ENCODE measurements at regions of chr10 and their contacts with region 1.

Region 1: GRCh38 chr10:119270762-119271366 is 63.5 kb downstream of the GRK5 start:
- DNase-seq: no peak
- H3K4me3 ChIP-seq: no peak overlapping the region
- H3K27ac ChIP-seq: peak overlapping the region; percentile 77
- H3K4me1 ChIP-seq: peaks cover 34% of the 10 kb centered on the region
- H3K27me3 ChIP-seq: no peaks in the 10 kb centered on the region
- CTCF ChIP-seq: no peak
- POLR2A ChIP-seq: peak; percentile 56

Region 2: GRCh38 chr10:119235356-119235755 is 35.5 kb before region 1 on chr10:
- CTCF ChIA-PET with region 1: interaction called, 12 read pairs
- POLR2A ChIA-PET with region 1: interaction called, 4 read pairs
- dilution Hi-C with region 1: no loop called
- intact Hi-C with region 1: loop called (anchors 1 kb)
- DNase-seq: peak; percentile 62
- H3K4me3 ChIP-seq: no peak overlapping the region
- H3K27ac ChIP-seq: peak overlapping the region; percentile 56
- H3K4me1 ChIP-seq: peaks cover 49% of the 10 kb centered on the region
- H3K27me3 ChIP-seq: no peaks in the 10 kb centered on the region
- CTCF ChIP-seq: no peak
- POLR2A ChIP-seq: no peak

Region 3: GRCh38 chr10:119253433-119254174 is 17.3 kb before region 1 on chr10:
- CTCF ChIA-PET with region 1: interaction called, 18 read pairs
- POLR2A ChIA-PET with region 1: interaction called, 6 read pairs
- dilution Hi-C with region 1: no loop called
- intact Hi-C with region 1: loop called (anchors 1 kb)
- DNase-seq: peak; percentile 73
- H3K4me3 ChIP-seq: no peak overlapping the region
- H3K27ac ChIP-seq: peak overlapping the region; percentile 35
- H3K4me1 ChIP-seq: peaks cover 46% of the 10 kb centered on the region
- H3K27me3 ChIP-seq: no peaks in the 10 kb centered on the region
- CTCF ChIP-seq: no peak
- POLR2A ChIP-seq: no peak

Region 4: DNA sequence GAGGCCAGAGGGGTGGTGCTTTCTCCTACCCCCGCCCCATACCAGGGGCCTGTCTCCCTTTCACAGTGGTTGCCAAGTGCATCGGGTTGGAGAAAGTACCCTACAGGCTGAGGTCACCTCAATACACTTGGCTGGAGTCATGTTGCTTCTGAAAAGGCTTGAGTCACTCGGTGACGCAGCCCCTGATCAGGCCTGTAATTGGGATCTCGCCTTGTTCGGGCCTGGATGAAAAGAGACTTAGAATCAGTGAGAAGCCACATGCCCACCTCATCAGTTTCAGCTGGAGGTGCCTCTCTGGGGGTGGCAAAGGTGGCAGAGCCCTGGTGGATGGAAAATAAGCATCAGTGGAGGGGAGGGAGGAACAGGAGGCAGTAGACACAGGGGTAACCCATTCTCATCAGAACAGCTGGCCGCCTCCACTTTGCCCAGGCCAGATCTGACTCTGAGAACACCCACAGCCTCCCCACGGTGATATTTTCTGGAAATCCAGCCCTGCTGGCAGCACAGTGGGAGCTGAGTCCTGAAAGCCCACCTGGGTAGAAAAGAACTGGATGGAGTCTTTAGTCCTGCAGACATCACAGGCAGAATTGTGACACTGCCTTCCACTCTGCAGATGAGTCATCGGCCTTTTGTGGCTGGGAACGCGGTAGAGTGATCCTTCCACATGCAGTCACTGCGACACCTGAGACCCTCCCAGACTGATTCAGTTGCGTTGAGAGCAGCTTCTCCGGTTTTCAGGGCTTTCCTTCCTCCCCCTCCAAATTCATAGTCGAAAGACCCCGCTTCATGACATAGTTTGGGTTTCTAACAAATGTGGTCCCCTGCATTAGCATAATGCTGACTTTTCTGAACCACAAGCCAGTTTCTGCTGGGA is 44.5 kb after region 1 on chr10:
- CTCF ChIA-PET with region 1: no interaction called
- POLR2A ChIA-PET with region 1: no interaction called
- dilution Hi-C with region 1: no loop called
- intact Hi-C with region 1: loop called (anchors 1 kb)
- DNase-seq: peak; percentile 57
- H3K4me3 ChIP-seq: no peak overlapping the region
- H3K27ac ChIP-seq: peak overlapping the region; percentile 94
- H3K4me1 ChIP-seq: peaks cover 35% of the 10 kb centered on the region
- H3K27me3 ChIP-seq: no peaks in the 10 kb centered on the region
- CTCF ChIP-seq: no peak
- POLR2A ChIP-seq: no peak

Region 5: GRCh38 chr10:119370111-119370741 is 99.4 kb after region 1 on chr10:
- CTCF ChIA-PET with region 1: interaction called, 10 read pairs
- POLR2A ChIA-PET with region 1: interaction called, 6 read pairs
- dilution Hi-C with region 1: no loop called
- intact Hi-C with region 1: loop called (anchors 1 kb)
- DNase-seq: peak; percentile 92
- H3K4me3 ChIP-seq: peak overlapping the region in 2 of 3 experiments; percentile 11 to 68
- H3K27ac ChIP-seq: peak overlapping the region; percentile 98
- H3K4me1 ChIP-seq: peaks cover 43% of the 10 kb centered on the region
- H3K27me3 ChIP-seq: no peaks in the 10 kb centered on the region
- CTCF ChIP-seq: no peak
- POLR2A ChIP-seq: no peak

Region 6: DNA sequence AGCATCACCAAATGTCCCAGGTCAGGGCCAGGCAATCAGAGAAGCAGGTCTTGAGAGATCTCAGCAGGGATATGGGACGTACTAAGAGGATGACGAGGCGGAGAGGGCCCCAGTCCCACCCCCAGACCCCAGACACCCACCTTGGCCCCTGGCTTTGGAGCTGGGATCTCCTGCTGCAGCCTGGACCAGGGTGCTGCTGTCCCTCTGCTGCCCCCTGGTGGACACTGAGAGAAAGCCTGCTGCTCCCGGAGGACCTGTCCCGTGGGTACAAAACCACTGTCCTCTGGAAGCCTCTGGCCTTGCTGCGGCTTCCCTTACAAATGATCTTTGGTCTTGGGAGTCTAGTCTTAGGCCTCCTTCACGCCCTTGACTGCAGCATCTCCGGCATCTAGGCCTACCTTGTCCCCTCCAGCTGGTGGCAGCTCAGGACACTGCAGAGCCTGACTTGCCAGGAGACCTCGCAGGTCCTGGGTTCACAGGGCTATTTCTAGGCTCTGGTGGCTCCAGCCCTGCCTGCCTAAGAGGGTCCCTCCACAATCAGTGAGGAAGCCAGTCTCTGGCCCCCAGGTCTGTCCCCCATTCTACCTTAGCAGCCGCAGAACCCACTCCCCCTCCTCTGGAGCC is 174.6 kb after region 1 on chr10:
- CTCF ChIA-PET with region 1: interaction called, 12 read pairs
- POLR2A ChIA-PET with region 1: no interaction called
- dilution Hi-C with region 1: no loop called
- intact Hi-C with region 1: loop called (anchors 1 kb)
- DNase-seq: peak; percentile 57
- H3K4me3 ChIP-seq: no peak overlapping the region
- H3K27ac ChIP-seq: no peak overlapping the region
- H3K4me1 ChIP-seq: no peaks in the 10 kb centered on the region
- H3K27me3 ChIP-seq: no peaks in the 10 kb centered on the region
- CTCF ChIP-seq: peak; percentile 78 to 96
- POLR2A ChIP-seq: no peak

Region 7: GRCh38 chr10:119496273-119496672 is 225.4 kb after region 1 on chr10:
- CTCF ChIA-PET with region 1: no interaction called
- POLR2A ChIA-PET with region 1: no interaction called
- dilution Hi-C with region 1: no loop called
- intact Hi-C with region 1: no loop called
- DNase-seq: no peak
- H3K4me3 ChIP-seq: no peak overlapping the region
- H3K27ac ChIP-seq: no peak overlapping the region
- H3K4me1 ChIP-seq: no peaks in the 10 kb centered on the region
- H3K27me3 ChIP-seq: no peaks in the 10 kb centered on the region
- CTCF ChIP-seq: no peak
- POLR2A ChIP-seq: no peak

Measured in endothelial cell of umbilical vein (primary cell).